ENCODE measurements at regions of chr15 and their contacts with region 1.

Region 1: DNA sequence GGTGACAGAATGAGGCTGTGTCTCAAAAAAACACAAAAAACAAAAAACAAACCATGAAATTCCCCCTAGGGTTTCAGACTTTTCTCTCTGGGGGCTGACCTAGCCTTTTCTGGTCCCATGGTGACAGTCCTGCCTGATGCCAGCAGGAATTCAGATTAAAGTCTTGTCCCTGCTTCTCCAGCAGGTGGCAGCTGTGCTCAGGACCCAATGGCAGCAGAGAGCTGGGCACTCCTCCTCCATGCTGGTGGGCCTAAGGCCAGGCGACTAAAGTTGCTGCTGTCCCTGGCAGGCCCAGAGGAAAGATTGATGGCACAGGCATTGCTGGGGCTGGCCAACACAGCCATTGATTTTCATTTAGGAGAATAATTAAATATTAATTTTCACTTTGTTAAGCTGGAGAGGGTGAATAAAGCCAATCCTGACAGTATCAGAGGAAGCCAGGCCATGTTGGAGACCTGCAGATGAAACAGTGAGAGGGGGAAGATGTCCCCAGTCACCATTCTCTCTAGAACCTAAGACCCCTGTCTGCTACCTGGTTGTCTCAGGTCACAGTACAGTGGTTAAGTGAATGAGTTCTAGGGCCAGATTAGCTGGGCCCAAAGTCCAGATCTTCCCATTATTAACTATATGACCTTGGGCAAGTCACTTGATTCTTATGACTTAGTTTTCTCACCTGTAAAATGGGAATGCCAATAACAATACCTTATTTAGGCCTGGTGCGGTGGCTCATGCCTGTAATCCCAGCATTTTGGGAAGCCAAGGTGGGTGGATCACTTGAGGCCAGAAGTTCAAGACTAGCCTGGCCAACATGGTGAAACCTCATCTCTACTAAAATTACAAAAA is 7.1 kb downstream of the CELF6 start:
- DNase-seq: peak; percentile 67
- H3K4me3 ChIP-seq: no peak overlapping the region
- H3K27ac ChIP-seq: no peak overlapping the region
- H3K4me1 ChIP-seq: no peaks in the 10 kb centered on the region
- H3K27me3 ChIP-seq: peaks cover 0 to 2% of the 10 kb centered on the region in 2 experiments
- CTCF ChIP-seq: peak; percentile 79 to 83
- POLR2A ChIP-seq: no peak

Region 2: GRCh38 chr15:72220678-72221077 is 92.1 kb before region 1 on chr15:
- CTCF ChIA-PET with region 1: no interaction called
- POLR2A ChIA-PET with region 1: no interaction called
- dilution Hi-C with region 1: no loop called
- intact Hi-C with region 1: no loop called
- DNase-seq: no peak
- H3K4me3 ChIP-seq: no peak overlapping the region
- H3K27ac ChIP-seq: no peak overlapping the region
- H3K4me1 ChIP-seq: peaks cover 21% of the 10 kb centered on the region
- H3K27me3 ChIP-seq: no peaks in the 10 kb centered on the region
- CTCF ChIP-seq: no peak
- POLR2A ChIP-seq: no peak

Region 3: DNA sequence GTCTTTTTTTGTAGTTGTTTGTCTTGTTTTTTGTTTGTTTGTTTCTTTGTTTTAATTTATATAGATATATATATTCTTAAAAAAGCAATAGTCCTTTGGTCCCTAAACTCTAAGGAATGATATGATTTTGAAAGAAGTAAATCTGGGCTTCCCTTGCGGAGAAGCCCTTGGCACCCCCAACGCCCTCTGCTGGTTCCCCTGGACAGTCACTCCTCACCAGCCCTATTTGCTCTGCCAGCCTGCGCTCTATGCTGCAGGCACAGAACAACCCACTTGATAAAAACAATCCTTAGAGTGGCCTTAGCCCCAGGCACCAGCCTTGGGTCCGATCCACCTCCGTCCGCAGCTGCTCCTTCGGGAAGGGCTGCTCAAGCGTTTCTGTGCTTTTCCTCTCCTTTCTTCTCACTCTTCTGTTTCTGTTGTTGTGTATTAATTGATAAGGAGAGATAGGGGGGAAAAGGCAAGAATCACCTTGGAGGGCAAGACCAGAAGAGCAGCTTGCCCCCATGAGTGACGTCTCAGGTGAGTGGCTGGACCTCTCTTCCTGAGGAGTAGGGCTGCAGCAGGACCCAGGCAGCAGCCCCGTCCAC is 26.8 kb before region 1 on chr15:
- CTCF ChIA-PET with region 1: interaction called, 19 read pairs
- POLR2A ChIA-PET with region 1: no interaction called
- dilution Hi-C with region 1: no loop called
- intact Hi-C with region 1: no loop called
- DNase-seq: peak; percentile 40
- H3K4me3 ChIP-seq: no peak overlapping the region
- H3K27ac ChIP-seq: no peak overlapping the region
- H3K4me1 ChIP-seq: no peaks in the 10 kb centered on the region
- H3K27me3 ChIP-seq: peaks cover 1% of the 10 kb centered on the region in 2 experiments
- CTCF ChIP-seq: peak; percentile 65 to 77
- POLR2A ChIP-seq: no peak

Region 4: DNA sequence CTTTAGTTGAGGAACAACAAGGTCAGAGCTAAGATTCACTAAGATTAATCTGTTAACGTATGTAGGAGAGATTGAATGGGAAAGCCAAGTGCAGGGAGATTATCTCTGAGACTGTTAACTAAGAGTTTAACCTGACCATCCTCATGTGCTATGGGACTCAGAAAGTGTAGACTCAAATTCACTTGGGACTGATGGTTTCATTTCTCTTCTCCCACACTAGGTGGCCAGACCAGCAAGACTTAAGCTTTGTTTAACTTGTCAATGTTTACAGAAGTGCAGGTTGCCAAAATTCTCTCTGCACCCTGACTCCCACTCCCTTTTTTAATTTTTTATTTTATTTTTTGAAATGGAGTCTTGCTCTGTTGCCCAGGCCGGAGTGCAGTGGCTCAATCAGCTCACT is 69.3 kb after region 1 on chr15:
- CTCF ChIA-PET with region 1: interaction called, 11 read pairs
- POLR2A ChIA-PET with region 1: no interaction called
- dilution Hi-C with region 1: no loop called
- intact Hi-C with region 1: no loop called
- DNase-seq: no peak
- H3K4me3 ChIP-seq: no peak overlapping the region
- H3K27ac ChIP-seq: no peak overlapping the region
- H3K4me1 ChIP-seq: peaks cover 14% of the 10 kb centered on the region
- H3K27me3 ChIP-seq: peaks cover 15% of the 10 kb centered on the region in 2 experiments
- CTCF ChIP-seq: peak in 1 of 2 donors; percentile 25
- POLR2A ChIP-seq: no peak

Region 5: DNA sequence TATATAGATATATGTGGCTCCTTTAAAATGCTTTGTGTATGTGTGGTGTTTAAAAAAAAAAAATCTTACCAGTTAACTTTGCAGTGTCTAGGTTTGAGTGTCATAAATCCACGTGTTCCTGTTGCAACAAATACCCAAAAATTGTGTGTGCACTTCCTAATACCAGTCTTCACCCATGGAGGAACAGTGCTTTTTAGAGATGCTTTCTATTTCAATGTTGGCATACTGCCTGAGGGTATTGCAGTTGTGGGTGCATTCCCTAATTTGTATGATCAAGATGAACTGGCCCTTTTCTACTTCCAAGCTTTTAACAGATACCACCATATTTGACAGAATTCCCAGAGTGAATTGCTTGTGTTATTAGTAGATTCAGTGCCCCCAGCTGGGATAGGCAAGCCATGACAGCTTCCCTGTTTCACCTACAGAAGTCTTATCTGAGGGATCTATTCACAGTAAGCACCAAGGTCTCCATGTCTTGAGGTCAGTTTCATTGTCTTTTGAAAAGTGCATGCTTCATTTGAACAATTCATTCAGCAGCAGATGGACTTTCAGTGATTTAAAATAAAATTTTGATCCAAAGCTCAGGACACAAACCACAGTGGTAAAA is 272.8 kb after region 1 on chr15:
- CTCF ChIA-PET with region 1: interaction called, 14 read pairs
- POLR2A ChIA-PET with region 1: no interaction called
- dilution Hi-C with region 1: no loop called
- intact Hi-C with region 1: no loop called
- DNase-seq: peak; percentile 15
- H3K4me3 ChIP-seq: no peak overlapping the region
- H3K27ac ChIP-seq: no peak overlapping the region
- H3K4me1 ChIP-seq: no peaks in the 10 kb centered on the region
- H3K27me3 ChIP-seq: no peaks in the 10 kb centered on the region
- CTCF ChIP-seq: no peak
- POLR2A ChIP-seq: no peak

Region 6: DNA sequence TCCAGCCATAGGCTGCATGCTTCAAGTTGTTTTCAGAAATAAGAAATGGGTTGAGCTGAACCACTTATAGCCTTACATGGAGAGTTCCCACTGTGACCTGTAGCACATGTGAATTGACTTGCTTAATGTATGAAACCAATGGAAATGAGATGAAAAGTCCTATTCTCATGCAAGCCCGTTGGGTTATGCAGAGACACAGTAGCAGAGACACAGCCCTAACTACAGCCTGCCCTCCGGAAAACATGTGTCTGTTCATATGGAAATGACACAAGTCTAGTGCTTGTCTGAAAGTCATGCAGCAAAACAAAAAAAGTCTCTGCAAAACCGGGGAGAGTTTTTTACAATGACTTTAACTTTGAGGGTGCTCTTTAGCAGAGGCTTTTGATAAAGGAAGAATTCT is 358.7 kb after region 1 on chr15:
- CTCF ChIA-PET with region 1: interaction called, 33 read pairs
- POLR2A ChIA-PET with region 1: no interaction called
- dilution Hi-C with region 1: no loop called
- intact Hi-C with region 1: loop called (anchors 10 kb)
- DNase-seq: no peak
- H3K4me3 ChIP-seq: no peak overlapping the region
- H3K27ac ChIP-seq: no peak overlapping the region
- H3K4me1 ChIP-seq: no peaks in the 10 kb centered on the region
- H3K27me3 ChIP-seq: peaks cover 2 to 14% of the 10 kb centered on the region in 2 experiments
- CTCF ChIP-seq: no peak
- POLR2A ChIP-seq: no peak

Measured in endothelial cell of umbilical vein (primary cell).